ENCODE measurements at regions of chr5 and their contacts with region 1.

Region 1: DNA sequence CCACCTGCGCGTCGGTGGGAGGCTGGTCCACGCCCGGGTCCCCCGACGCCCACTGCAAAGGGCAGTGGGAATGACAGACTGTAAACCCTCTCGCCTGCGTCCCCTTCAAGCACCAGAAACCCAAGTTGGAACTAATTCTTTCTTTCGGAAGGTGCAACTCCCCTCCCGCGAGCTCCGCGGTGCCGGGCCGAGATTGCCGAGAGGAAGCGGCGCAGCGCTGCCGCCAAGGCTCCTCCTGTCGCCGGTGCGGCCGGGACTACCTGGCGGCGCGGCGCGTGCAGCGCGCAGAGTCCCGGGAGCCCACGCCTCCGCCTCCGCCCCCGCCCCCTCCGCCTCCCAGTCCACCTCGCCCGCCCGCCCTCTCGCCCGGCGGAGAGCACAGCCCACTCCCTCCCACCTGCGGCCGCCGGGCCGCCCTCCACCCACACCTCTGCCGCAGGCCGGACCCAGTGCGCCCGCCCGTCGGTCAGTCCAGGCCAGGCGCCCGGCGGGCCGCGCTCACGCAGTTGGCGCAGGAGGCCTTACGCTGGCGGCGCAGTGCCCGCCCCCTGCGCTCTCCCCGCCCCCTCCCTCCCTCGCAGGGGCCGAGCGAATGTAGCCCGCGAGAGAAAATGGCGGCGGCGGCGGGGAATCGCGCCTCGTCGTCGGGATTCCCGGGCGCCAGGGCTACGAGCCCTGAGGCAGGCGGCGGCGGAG is at the start of gene MAP3K1:
- DNase-seq: peak; percentile 69 to 94 (median 80)
- ATAC-seq: peak; percentile 71
- H3K4me3 ChIP-seq: peak within 1 kb of the TSS; percentile 66
- H3K4me3 Mint-ChIP-seq: peak within 1 kb of the TSS; percentile 99
- H3K27ac ChIP-seq: peak within 1 kb of the TSS; percentile 78 to 82
- H3K27ac Mint-ChIP-seq: peak within 1 kb of the TSS; percentile 97
- H3K4me1 ChIP-seq: peaks cover 10% of the 10 kb centered on the region
- H3K4me1 Mint-ChIP-seq: peaks cover 43% of the 10 kb centered on the region
- H3K27me3 ChIP-seq: no peaks in the 10 kb centered on the region
- H3K27me3 Mint-ChIP-seq: no peaks in the 10 kb centered on the region
- CTCF ChIP-seq: no peak
- total RNA-seq, gene MAP3K1: 59.4 to 62.5 TPM

Region 2: DNA sequence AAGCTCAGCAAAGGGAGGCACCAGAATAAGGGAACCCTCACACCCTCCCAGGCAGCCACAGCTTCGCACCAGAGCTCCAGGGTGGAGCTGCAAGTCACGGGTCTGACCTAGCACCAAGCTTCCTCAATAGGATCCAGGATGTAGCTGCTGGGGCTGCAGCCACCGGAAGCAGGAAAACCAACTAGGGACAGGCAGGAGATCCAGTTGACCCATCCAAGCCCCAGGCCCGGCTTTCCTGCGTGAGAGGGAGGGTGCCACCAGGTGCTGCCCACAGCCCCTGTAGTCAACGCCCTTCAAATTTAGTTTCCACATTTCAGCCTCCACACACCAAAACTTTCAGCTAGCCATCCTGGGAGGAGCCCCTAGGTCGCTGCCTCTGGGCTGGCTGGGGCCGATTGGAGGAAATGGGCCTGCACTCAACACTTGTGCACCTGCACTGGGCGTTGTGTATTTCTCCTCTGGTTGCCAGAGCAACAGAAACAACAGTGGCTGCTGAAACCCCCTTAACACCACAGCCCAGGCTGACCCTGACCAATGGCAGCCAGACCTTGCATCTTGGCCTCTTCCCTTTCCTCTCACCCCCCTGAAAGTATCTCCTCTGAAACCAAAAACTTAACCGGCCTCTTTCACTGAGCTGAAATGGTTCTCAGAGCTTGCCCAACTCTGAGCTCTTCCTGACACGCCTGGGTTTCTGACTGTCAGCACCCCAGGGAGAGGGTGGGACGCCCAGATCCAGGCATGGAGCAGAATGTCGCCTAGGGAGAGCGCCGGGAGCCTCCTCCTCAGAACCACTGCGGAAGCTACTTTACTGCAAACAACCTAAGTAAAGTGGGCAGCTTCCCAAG is 226.3 kb before region 1 on chr5:
- CTCF ChIA-PET with region 1: no interaction called
- POLR2A ChIA-PET with region 1: interaction called, 5 read pairs
- intact Hi-C with region 1: loop called in 1 of 2 experiments (anchors 5 kb)
- DNase-seq: peak; percentile 32 to 92 (median 60)
- ATAC-seq: peak; percentile 72
- H3K4me3 ChIP-seq: no peak overlapping the region
- H3K4me3 Mint-ChIP-seq: peak overlapping the region; percentile 52
- H3K27ac ChIP-seq: peak overlapping the region; percentile 60 to 95
- H3K27ac Mint-ChIP-seq: peak overlapping the region; percentile 87
- H3K4me1 ChIP-seq: peaks cover 51% of the 10 kb centered on the region
- H3K4me1 Mint-ChIP-seq: peaks cover 62% of the 10 kb centered on the region
- H3K27me3 ChIP-seq: no peaks in the 10 kb centered on the region
- H3K27me3 Mint-ChIP-seq: no peaks in the 10 kb centered on the region
- CTCF ChIP-seq: no peak

Region 3: DNA sequence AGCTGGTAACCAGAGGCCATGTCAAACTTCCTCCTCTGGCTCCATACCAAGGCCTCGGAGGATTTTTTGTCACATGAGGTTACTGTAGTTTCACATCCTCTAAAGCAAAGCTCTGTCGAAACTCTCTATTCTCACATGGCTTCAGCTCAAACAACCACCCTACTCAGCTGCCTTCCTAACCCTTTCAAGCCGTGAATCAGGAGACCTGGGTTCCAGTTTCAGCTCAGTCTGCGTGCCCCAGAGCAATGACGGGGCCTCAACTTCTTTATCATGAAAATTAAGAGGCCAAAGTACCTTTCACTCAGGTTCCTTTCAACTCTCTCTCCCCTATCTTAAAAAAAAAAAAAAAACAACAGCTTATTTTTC is 145.0 kb before region 1 on chr5:
- CTCF ChIA-PET with region 1: no interaction called
- POLR2A ChIA-PET with region 1: interaction called, 13 read pairs
- intact Hi-C with region 1: no loop called
- DNase-seq: peak in 9 of 14 experiments; percentile 10 to 84 (median 23)
- ATAC-seq: peak; percentile 84
- H3K4me3 ChIP-seq: no peak overlapping the region
- H3K4me3 Mint-ChIP-seq: peak overlapping the region; percentile 36
- H3K27ac ChIP-seq: peak overlapping the region; percentile 57 to 70
- H3K27ac Mint-ChIP-seq: peak overlapping the region; percentile 79
- H3K4me1 ChIP-seq: peaks cover 39% of the 10 kb centered on the region
- H3K4me1 Mint-ChIP-seq: peaks cover 32% of the 10 kb centered on the region
- H3K27me3 ChIP-seq: no peaks in the 10 kb centered on the region
- H3K27me3 Mint-ChIP-seq: no peaks in the 10 kb centered on the region
- CTCF ChIP-seq: no peak

Region 4: GRCh38 chr5:56696900-56697299 is 118.2 kb before region 1 on chr5:
- CTCF ChIA-PET with region 1: no interaction called
- POLR2A ChIA-PET with region 1: interaction called, 5 read pairs
- intact Hi-C with region 1: loop called in 1 of 2 experiments (anchors 5 kb)
- DNase-seq: peak in 6 of 14 experiments; percentile 20 to 75 (median 44)
- ATAC-seq: no peak
- H3K4me3 ChIP-seq: no peak overlapping the region
- H3K4me3 Mint-ChIP-seq: peak overlapping the region; percentile 26
- H3K27ac ChIP-seq: no peak overlapping the region
- H3K27ac Mint-ChIP-seq: peak overlapping the region; percentile 78
- H3K4me1 ChIP-seq: peaks cover 74% of the 10 kb centered on the region
- H3K4me1 Mint-ChIP-seq: peaks cover 97% of the 10 kb centered on the region
- H3K27me3 ChIP-seq: no peaks in the 10 kb centered on the region
- H3K27me3 Mint-ChIP-seq: no peaks in the 10 kb centered on the region
- CTCF ChIP-seq: no peak

Region 5: GRCh38 chr5:56838409-56839039 is 23.4 kb after region 1 on chr5:
- CTCF ChIA-PET with region 1: interaction called, 16 read pairs
- POLR2A ChIA-PET with region 1: interaction called, 13 read pairs
- intact Hi-C with region 1: loop called in 1 of 2 experiments (anchors 2 kb)
- DNase-seq: peak in 4 of 14 experiments; percentile 20 to 81 (median 77)
- ATAC-seq: peak; percentile 66
- H3K4me3 ChIP-seq: no peak overlapping the region
- H3K4me3 Mint-ChIP-seq: peak overlapping the region; percentile 74
- H3K27ac ChIP-seq: peak overlapping the region in 1 of 2 donors; percentile 38
- H3K27ac Mint-ChIP-seq: peak overlapping the region; percentile 81
- H3K4me1 ChIP-seq: peaks cover 51% of the 10 kb centered on the region
- H3K4me1 Mint-ChIP-seq: peaks cover 92% of the 10 kb centered on the region
- H3K27me3 ChIP-seq: no peaks in the 10 kb centered on the region
- H3K27me3 Mint-ChIP-seq: no peaks in the 10 kb centered on the region
- CTCF ChIP-seq: peak; percentile 72

Region 6: DNA sequence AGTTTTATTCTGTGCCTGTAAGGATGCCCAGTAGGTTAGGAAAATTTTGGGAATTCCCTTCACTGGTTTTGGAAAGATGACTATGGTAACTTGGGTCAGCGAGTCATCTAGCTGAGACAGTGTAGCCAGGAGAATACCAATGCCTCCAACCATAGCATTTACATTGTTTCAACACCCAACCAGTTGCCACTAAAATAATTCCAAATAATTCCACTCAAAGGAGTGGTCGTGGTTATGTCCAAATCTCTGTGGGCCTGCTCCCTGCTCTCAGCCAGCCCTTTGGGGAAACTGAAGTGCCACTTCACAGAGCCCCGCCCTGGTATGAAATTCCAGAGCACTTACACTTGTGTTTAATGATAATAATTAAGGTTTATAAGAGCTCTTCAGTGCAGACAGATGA is 1334.2 kb after region 1 on chr5:
- CTCF ChIA-PET with region 1: no interaction called
- POLR2A ChIA-PET with region 1: no interaction called
- intact Hi-C with region 1: no loop called
- DNase-seq: no peak
- ATAC-seq: no peak
- H3K4me3 ChIP-seq: no peak overlapping the region
- H3K4me3 Mint-ChIP-seq: no peak overlapping the region
- H3K27ac ChIP-seq: no peak overlapping the region
- H3K27ac Mint-ChIP-seq: no peak overlapping the region
- H3K4me1 ChIP-seq: no peaks in the 10 kb centered on the region
- H3K4me1 Mint-ChIP-seq: no peaks in the 10 kb centered on the region
- H3K27me3 ChIP-seq: no peaks in the 10 kb centered on the region
- H3K27me3 Mint-ChIP-seq: peaks cover 8% of the 10 kb centered on the region
- CTCF ChIP-seq: no peak

Measured in CD4-positive, alpha-beta T cell (primary cell).